K562 (cell line): ENCODE measurements at regions of chr1 and their contacts with region 1.

Region 1: DNA sequence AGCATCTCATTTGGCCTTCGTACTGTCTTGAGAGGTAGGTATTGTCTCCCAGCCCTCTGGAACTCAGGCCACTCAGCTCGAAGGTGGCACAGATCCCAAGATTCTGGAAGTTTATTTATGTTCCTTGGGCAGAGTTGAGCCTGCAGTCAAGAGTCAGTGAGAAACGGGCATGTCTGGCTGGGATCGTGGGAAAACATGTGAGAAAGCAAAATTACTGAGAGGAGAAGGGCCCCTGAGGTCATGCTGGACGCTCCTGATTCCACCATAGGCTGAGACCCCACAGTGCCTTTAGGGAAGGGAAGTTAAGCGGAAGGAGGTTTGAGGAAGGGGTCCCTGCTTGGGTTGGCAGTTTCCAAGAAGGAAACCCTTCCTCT is 12.5 kb upstream of the SEMA4A start:
- DNase-seq: no peak
- ATAC-seq: peak; percentile 23
- H3K4me3 ChIP-seq: no peak overlapping the region
- H3K27ac ChIP-seq: no peak overlapping the region
- H3K4me1 ChIP-seq: peaks cover 0 to 20% of the 10 kb centered on the region in 2 experiments; a peak in 2 of 5 replicates
- H3K27me3 ChIP-seq: no peaks in the 10 kb centered on the region
- CTCF ChIP-seq: no peak
- EP300 ChIP-seq: no peak
- POLR2A ChIP-seq: no peak
- RAD21 ChIP-seq: no peak

Region 2: GRCh38 chr1:155938220-155938627 is 202.6 kb before region 1 on chr1:
- CTCF ChIA-PET with region 1: no interaction called
- POLR2A ChIA-PET with region 1: no interaction called
- in situ Hi-C with region 1: no loop called
- intact Hi-C with region 1: no loop called
- DNase-seq: peak; percentile 54 to 81 (median 68)
- ATAC-seq: peak; percentile 63
- H3K4me3 ChIP-seq: no peak overlapping the region
- H3K27ac ChIP-seq: no peak overlapping the region
- H3K4me1 ChIP-seq: peaks cover 19 to 33% of the 10 kb centered on the region in 2 experiments
- H3K27me3 ChIP-seq: no peaks in the 10 kb centered on the region
- CTCF ChIP-seq: peak; percentile 80 to 96 (median 91)
- EP300 ChIP-seq: no peak
- POLR2A ChIP-seq: no peak
- RAD21 ChIP-seq: peak; percentile 97 to 98

Region 3: GRCh38 chr1:156154317-156154749 is 13.5 kb after region 1 on chr1:
- CTCF ChIA-PET with region 1: no interaction called
- POLR2A ChIA-PET with region 1: interaction called, 15 read pairs
- in situ Hi-C with region 1: no loop called
- intact Hi-C with region 1: no loop called
- DNase-seq: no peak
- ATAC-seq: peak; percentile 18; the same call in 2 of the 3 replicates
- H3K4me3 ChIP-seq: no peak overlapping the region
- H3K27ac ChIP-seq: no peak overlapping the region
- H3K4me1 ChIP-seq: peaks cover 0 to 9% of the 10 kb centered on the region in 2 experiments; a peak in 3 of 5 replicates
- H3K27me3 ChIP-seq: peaks cover 3 to 8% of the 10 kb centered on the region in 2 experiments; a peak in 1 of 5 replicates
- CTCF ChIP-seq: no peak
- EP300 ChIP-seq: no peak
- POLR2A ChIP-seq: no peak
- RAD21 ChIP-seq: no peak

Region 4: GRCh38 chr1:156226116-156226538 is 85.3 kb after region 1 on chr1:
- CTCF ChIA-PET with region 1: interaction called, 44 read pairs
- POLR2A ChIA-PET with region 1: interaction called, 3 read pairs
- in situ Hi-C with region 1: loop called (anchors 5 kb)
- intact Hi-C with region 1: loop called (anchors 2 kb)
- DNase-seq: no peak
- ATAC-seq: no peak
- H3K4me3 ChIP-seq: no peak overlapping the region
- H3K27ac ChIP-seq: no peak overlapping the region
- H3K4me1 ChIP-seq: peaks cover 3 to 7% of the 10 kb centered on the region in 2 experiments; a peak in 3 of 5 replicates
- H3K27me3 ChIP-seq: no peaks in the 10 kb centered on the region
- CTCF ChIP-seq: no peak
- EP300 ChIP-seq: no peak
- POLR2A ChIP-seq: no peak
- RAD21 ChIP-seq: no peak

Region 5: DNA sequence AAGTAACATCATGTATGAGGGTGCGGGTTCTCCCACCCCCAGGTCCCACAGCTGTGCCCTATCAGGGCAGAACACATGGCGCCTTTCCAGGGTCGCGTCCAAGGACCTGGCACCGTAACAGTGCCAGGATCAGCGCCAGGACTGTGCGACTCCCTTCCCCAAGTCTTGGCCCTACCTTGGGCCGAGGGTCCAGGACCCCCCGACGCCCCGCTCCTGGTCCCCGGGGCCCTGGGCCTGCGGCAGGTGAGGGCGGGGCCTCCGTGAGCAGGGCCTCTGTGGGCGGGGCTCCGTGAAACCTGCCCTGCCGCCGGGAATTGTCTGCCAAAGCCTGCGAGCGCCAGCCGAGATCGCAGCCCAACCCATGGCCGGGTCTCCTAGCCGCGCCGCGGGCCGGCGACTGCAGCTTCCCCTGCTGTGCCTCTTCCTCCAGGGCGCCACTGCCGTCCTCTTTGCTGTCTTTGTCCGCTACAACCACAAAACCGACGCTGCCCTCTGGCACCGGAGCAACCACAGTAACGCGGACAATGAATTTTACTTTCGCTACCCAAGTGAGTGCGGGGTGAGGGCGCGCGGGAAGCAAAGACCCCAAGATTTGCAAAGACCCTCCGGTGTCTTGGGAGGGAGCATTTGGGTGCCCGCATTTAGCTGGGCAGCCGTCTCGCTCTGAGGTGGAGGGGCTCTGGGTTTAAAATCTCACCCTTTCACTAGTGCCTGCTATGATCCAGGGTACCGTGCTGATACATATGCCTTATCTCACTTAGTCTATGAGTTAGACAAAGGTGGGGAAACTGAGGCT is 228.2 kb after region 1 on chr1 and contains the start of gene RHBG:
- CTCF ChIA-PET with region 1: no interaction called
- POLR2A ChIA-PET with region 1: no interaction called
- in situ Hi-C with region 1: no loop called
- intact Hi-C with region 1: no loop called
- DNase-seq: peak in 2 of 4 experiments; percentile 75 to 79
- ATAC-seq: peak; percentile 49
- H3K4me3 ChIP-seq: no peak within 1 kb of the TSS
- H3K27ac ChIP-seq: no peak within 1 kb of the TSS
- H3K4me1 ChIP-seq: peaks cover 0 to 16% of the 10 kb centered on the region in 2 experiments; a peak in 3 of 5 replicates
- H3K27me3 ChIP-seq: peaks cover 2 to 27% of the 10 kb centered on the region in 2 experiments; a peak in 3 of 5 replicates
- CTCF ChIP-seq: no peak
- EP300 ChIP-seq: no peak
- POLR2A ChIP-seq: no peak
- RAD21 ChIP-seq: no peak
- polyA plus RNA-seq, gene RHBG: not detected